ENCODE measurements at regions of chr6 and their contacts with region 1.

Region 1: GRCh38 chr6:134123666-134124208 is 71.3 kb upstream of the SLC2A12 start:
- DNase-seq: peak; percentile 12
- ATAC-seq: peak; percentile 70
- H3K4me3 ChIP-seq: no peak overlapping the region
- H3K27ac ChIP-seq: no peak overlapping the region
- H3K4me1 ChIP-seq: no peaks in the 10 kb centered on the region
- H3K27me3 ChIP-seq: no peaks in the 10 kb centered on the region
- CTCF ChIP-seq: peak; percentile 57 to 58 (median 58)
- EP300 ChIP-seq: no peak
- POLR2A ChIP-seq: no peak
- RAD21 ChIP-seq: peak; percentile 39

Region 2: GRCh38 chr6:133951881-133952814 is 171.6 kb before region 1 on chr6:
- CTCF ChIA-PET with region 1: no interaction called
- POLR2A ChIA-PET with region 1: no interaction called
- RAD21 ChIA-PET with region 1: no interaction called
- SMC1A ChIA-PET with region 1: no interaction called
- in situ Hi-C with region 1: no loop called
- intact Hi-C with region 1: no loop called
- DNase-seq: no peak
- ATAC-seq: peak; percentile 75
- H3K4me3 ChIP-seq: peak overlapping the region; percentile 88
- H3K27ac ChIP-seq: peak overlapping the region; percentile 74
- H3K4me1 ChIP-seq: peaks cover 6% of the 10 kb centered on the region; the same call in 1 of the 2 replicates
- H3K27me3 ChIP-seq: no peaks in the 10 kb centered on the region
- CTCF ChIP-seq: peak in 2 of 3 experiments; percentile 23 to 37; a peak in 3 of 6 replicates
- EP300 ChIP-seq: no peak
- POLR2A ChIP-seq: peak; percentile 75
- RAD21 ChIP-seq: peak; percentile 21; the same call in 1 of the 2 replicates

Region 3: DNA sequence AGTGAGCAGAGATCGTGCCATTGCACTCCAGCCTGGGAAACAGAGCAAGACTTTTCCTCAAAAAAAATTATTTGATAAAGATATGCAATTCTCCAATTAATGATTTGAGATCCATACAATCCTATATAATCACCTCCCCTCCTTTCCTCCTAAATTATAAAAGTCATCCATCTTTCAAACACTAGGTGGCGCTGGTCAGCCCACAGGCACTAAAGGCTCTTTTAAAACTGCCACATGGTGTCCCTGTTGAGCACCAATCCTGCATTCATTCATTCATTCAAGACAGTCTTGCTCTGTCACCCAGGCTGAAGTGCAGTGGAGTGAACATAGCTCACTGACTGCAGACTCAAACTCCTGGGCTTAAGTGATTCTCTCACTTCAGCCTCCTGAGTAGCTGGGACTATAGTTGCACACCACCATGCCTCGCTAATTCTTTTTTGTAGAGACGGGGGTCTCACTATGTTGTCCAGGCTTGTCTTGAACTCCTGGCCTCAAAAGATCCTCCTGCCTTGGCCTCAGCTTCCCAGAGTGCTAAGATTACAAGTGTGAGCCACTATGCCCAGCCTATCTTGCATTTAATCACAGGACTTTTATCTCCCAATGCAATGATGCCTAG is 12.6 kb before region 1 on chr6:
- CTCF ChIA-PET with region 1: interaction called, 40 read pairs
- POLR2A ChIA-PET with region 1: no interaction called
- RAD21 ChIA-PET with region 1: no interaction called
- SMC1A ChIA-PET with region 1: interaction called, 3 read pairs
- in situ Hi-C with region 1: no loop called
- intact Hi-C with region 1: no loop called
- DNase-seq: no peak
- ATAC-seq: peak; percentile 77
- H3K4me3 ChIP-seq: no peak overlapping the region
- H3K27ac ChIP-seq: no peak overlapping the region
- H3K4me1 ChIP-seq: no peaks in the 10 kb centered on the region
- H3K27me3 ChIP-seq: no peaks in the 10 kb centered on the region; a peak in 2 of 4 replicates
- CTCF ChIP-seq: peak; percentile 81 to 91 (median 82)
- EP300 ChIP-seq: no peak
- POLR2A ChIP-seq: no peak
- RAD21 ChIP-seq: peak; percentile 35; the same call in 1 of the 2 replicates

Region 4: DNA sequence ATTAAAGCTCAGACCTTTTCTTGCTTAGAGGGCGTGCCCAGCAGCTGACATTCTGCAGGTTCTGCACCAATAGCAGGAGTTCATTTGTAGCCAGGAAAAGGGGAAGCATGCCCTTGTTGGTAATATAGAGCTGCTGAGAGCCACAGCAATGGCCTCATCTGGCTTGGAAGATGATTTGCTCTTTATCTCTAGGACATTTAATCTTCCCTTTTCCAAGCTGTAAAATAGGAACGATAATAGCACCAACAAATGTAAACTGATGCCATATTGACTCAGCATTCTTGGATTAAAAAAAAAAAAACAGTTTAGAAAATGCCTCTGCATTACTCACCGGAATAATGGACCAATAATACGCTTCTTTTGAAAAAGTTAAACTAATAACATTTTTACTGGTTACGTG is 22.0 kb after region 1 on chr6:
- CTCF ChIA-PET with region 1: interaction called, 15 read pairs
- POLR2A ChIA-PET with region 1: no interaction called
- RAD21 ChIA-PET with region 1: interaction called, 4 read pairs
- SMC1A ChIA-PET with region 1: no interaction called
- in situ Hi-C with region 1: no loop called
- intact Hi-C with region 1: no loop called
- DNase-seq: no peak
- ATAC-seq: peak; percentile 63; the same call in 2 of the 3 replicates
- H3K4me3 ChIP-seq: no peak overlapping the region
- H3K27ac ChIP-seq: no peak overlapping the region
- H3K4me1 ChIP-seq: no peaks in the 10 kb centered on the region
- H3K27me3 ChIP-seq: no peaks in the 10 kb centered on the region
- CTCF ChIP-seq: no peak
- EP300 ChIP-seq: no peak
- POLR2A ChIP-seq: no peak
- RAD21 ChIP-seq: no peak

Region 5: DNA sequence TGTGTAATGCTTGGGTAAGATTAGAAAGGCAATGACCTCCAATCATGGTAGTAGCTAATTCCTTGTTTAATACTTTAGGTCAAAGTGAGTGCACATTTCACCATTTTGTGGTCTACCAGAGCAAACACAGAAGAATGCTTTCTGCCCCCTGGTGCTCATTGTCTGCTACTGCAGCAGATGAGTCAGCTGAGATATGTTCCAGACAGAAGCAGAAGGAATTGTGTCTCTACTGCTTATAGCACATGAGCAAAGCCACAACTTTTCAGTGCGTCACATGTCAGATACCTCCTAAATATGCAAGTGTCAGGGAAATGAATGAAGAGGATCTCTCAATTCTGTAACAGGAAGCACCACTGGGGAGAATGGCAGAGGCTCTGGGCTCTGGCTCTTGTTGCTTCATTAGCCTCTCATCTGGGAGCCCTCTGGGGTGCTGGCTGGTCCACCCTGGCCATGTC is 517.3 kb after region 1 on chr6:
- CTCF ChIA-PET with region 1: interaction called, 10 read pairs
- POLR2A ChIA-PET with region 1: no interaction called
- RAD21 ChIA-PET with region 1: interaction called, 3 read pairs
- SMC1A ChIA-PET with region 1: interaction called, 4 read pairs
- in situ Hi-C with region 1: no loop called
- intact Hi-C with region 1: no loop called
- DNase-seq: peak; percentile 45
- ATAC-seq: peak; percentile 90
- H3K4me3 ChIP-seq: no peak overlapping the region
- H3K27ac ChIP-seq: no peak overlapping the region
- H3K4me1 ChIP-seq: no peaks in the 10 kb centered on the region
- H3K27me3 ChIP-seq: no peaks in the 10 kb centered on the region; a peak in 1 of 4 replicates
- CTCF ChIP-seq: peak; percentile 89 to 98 (median 93); a peak in 5 of 6 replicates
- EP300 ChIP-seq: no peak
- POLR2A ChIP-seq: no peak
- RAD21 ChIP-seq: peak; percentile 93

Region 6: DNA sequence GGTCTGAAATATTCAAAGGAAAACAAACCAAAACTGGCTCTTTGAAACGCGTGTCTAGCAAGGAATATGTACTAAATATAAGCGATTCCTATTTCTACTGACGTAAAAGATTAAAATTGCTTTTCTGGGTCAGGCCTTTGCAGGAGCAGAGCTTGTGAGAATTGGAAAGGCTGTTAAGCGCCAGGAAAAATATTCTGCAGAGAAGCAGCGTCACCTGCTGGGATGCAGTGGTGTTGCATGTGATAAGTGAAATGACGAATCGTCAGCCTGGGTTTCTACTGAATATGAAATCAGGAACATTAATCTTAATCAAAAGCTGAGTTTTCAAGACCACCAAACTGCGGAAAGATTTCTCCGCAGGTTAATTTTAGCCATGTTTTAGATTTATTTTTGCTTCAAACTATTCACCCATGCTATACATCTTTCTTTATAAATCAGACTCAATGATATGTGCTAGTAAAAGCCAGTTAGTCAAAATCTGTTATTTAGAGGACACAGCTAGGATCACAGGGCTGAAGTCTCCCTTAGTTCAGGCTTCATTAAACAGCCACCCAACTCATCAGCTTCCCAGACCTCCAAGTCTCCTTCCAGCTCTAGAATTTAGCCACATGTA is 758.8 kb after region 1 on chr6:
- CTCF ChIA-PET with region 1: interaction called, 12 read pairs
- POLR2A ChIA-PET with region 1: no interaction called
- RAD21 ChIA-PET with region 1: no interaction called
- SMC1A ChIA-PET with region 1: interaction called, 3 read pairs
- in situ Hi-C with region 1: no loop called
- intact Hi-C with region 1: no loop called
- DNase-seq: no peak
- ATAC-seq: peak; percentile 44; the same call in 2 of the 3 replicates
- H3K4me3 ChIP-seq: no peak overlapping the region
- H3K27ac ChIP-seq: no peak overlapping the region
- H3K4me1 ChIP-seq: no peaks in the 10 kb centered on the region
- H3K27me3 ChIP-seq: 0 out of 4 replicates have a peak, but pooled peaks cover 0 to 1% of the 10 kb centered on the region in 2 experiments
- CTCF ChIP-seq: peak; percentile 71 to 80 (median 76)
- EP300 ChIP-seq: no peak
- POLR2A ChIP-seq: no peak
- RAD21 ChIP-seq: peak; percentile 96

Measured in GM12878 (cell line).